ENCODE measurements at regions of chr15 and their contacts with region 1.

Region 1: DNA sequence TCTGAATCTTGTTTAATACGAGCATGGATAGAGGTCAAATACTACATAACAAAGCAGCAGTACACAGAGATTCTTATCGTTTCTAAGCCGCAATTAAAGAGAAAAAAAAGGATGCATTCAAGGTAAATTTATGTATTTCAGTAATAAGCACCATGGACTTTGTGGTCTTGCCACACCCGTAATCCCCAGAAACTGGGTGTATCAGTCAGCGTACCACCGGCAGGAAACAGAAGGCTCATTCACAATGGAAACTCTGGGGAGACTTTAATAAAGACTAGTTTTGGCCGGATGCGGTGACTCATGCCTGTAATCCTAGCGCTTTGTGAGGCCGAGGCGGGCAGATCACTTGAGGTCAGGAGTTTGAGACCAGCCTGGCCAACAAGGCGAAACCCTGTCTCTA is 81.9 kb upstream of the ZNF280D start:
- DNase-seq: peak; percentile 75
- H3K4me3 ChIP-seq: no peak overlapping the region
- H3K27ac ChIP-seq: peak overlapping the region; percentile 33
- H3K4me1 ChIP-seq: peaks cover 34% of the 10 kb centered on the region
- H3K27me3 ChIP-seq: peaks cover 0 to 10% of the 10 kb centered on the region in 2 experiments
- CTCF ChIP-seq: no peak
- POLR2A ChIP-seq: no peak

Region 2: GRCh38 chr15:56765251-56765650 is 50.0 kb before region 1 on chr15:
- CTCF ChIA-PET with region 1: interaction called, 3 read pairs
- POLR2A ChIA-PET with region 1: no interaction called
- dilution Hi-C with region 1: no loop called
- intact Hi-C with region 1: loop called (anchors 2 kb)
- DNase-seq: peak; percentile 90
- H3K4me3 ChIP-seq: no peak overlapping the region
- H3K27ac ChIP-seq: peak overlapping the region; percentile 24
- H3K4me1 ChIP-seq: peaks cover 39% of the 10 kb centered on the region
- H3K27me3 ChIP-seq: no peaks in the 10 kb centered on the region
- CTCF ChIP-seq: no peak
- POLR2A ChIP-seq: no peak

Region 3: DNA sequence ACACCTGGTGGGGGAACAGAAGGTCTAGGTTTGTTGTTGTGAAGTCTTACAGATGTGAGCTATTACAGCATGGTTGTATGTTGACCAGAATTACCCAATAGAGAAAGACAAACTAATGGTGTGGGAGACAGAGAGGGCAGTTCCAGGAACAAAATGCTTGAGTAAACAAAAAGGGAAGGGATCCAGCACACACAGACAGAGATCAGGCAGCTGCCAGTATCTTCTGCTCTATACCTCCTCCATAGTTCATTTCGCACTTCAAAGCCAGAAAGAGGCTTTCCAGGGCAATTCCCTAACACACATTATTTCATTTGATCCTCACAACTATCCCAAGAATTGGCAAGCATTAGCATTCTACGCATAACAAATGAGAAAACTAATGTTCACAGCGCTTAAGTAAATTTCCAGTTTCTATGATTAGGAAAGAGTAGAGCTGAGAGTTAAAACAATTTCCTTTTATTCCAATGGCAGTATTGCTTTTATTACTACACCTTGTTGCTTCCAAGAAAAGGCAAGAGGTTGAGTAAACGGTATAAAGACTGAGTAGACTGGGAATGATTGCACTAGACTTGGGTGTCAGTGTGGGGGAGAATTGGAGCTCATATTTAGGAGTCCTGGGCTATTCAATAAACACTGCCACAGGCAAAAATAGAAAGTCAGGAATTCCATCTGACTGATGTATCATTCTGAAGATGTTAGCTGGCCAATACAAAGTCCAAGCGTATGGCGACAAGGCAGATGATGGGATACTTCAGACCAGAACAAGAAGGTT is 42.2 kb before region 1 on chr15:
- CTCF ChIA-PET with region 1: no interaction called
- POLR2A ChIA-PET with region 1: no interaction called
- dilution Hi-C with region 1: no loop called
- intact Hi-C with region 1: loop called (anchors 2 kb)
- DNase-seq: no peak
- H3K4me3 ChIP-seq: no peak overlapping the region
- H3K27ac ChIP-seq: no peak overlapping the region
- H3K4me1 ChIP-seq: peaks cover 18% of the 10 kb centered on the region
- H3K27me3 ChIP-seq: no peaks in the 10 kb centered on the region
- CTCF ChIP-seq: no peak
- POLR2A ChIP-seq: no peak

Measured in endothelial cell of umbilical vein (primary cell).